HCT116 (cell line): ENCODE measurements at regions of chr1 and their contacts with region 1.

Region 1: DNA sequence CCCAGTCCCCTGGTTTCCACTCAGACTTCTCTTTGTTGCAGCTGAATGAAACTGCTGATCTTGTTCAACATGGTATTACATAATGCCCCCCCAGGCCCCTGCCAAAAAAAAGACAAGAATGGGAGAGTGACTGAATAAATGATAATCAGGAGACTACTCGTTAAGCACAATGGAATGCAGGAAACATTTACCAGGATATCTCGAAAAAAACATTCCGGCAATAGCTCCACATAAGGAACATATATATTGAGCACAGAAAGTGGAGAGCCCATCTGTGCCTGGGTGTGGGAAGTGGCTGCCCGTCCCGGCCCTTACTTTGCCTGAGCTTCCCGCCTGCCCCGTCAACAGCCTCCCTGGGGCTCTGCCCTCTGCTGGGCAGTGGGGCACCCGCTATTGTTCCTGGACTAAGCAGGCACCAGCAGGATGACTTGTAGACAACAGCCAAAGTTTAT is 13.4 kb downstream of the TRIM11 start:
- DNase-seq: no peak
- ATAC-seq: peak; percentile 79
- H3K4me3 ChIP-seq: no peak overlapping the region
- H3K27ac ChIP-seq: peak overlapping the region; percentile 64
- H3K4me1 ChIP-seq: peaks cover 25 to 33% of the 10 kb centered on the region in 2 experiments
- H3K27me3 ChIP-seq: no peaks in the 10 kb centered on the region
- CTCF ChIP-seq: peak; percentile 63 to 78 (median 73); a peak in 5 of 6 replicates
- POLR2A ChIP-seq: no peak
- RAD21 ChIP-seq: no peak; the same call in 1 of the 2 replicates

Region 2: GRCh38 chr1:228131766-228132165 is 261.5 kb before region 1 on chr1:
- CTCF ChIA-PET with region 1: interaction called, 9 read pairs
- POLR2A ChIA-PET with region 1: no interaction called
- RAD21 ChIA-PET with region 1: no interaction called
- intact Hi-C with region 1: loop called (anchors 1 kb)
- DNase-seq: no peak
- ATAC-seq: no peak
- H3K4me3 ChIP-seq: no peak overlapping the region
- H3K27ac ChIP-seq: 0 out of 2 replicates have a peak overlapping the region, but pooled peaks have one; percentile 6
- H3K4me1 ChIP-seq: peaks cover 7 to 18% of the 10 kb centered on the region in 2 experiments
- H3K27me3 ChIP-seq: peaks cover 3% of the 10 kb centered on the region; the same call in 1 of the 2 replicates
- CTCF ChIP-seq: no peak
- POLR2A ChIP-seq: no peak
- RAD21 ChIP-seq: no peak

Region 3: GRCh38 chr1:228378090-228378872 is 15.0 kb before region 1 on chr1:
- CTCF ChIA-PET with region 1: interaction called, 3 read pairs
- POLR2A ChIA-PET with region 1: no interaction called
- RAD21 ChIA-PET with region 1: no interaction called
- intact Hi-C with region 1: loop called (anchors 1 kb)
- DNase-seq: peak; percentile 56
- ATAC-seq: peak; percentile 88
- H3K4me3 ChIP-seq: peak overlapping the region; percentile 58 to 66
- H3K27ac ChIP-seq: peak overlapping the region; percentile 66
- H3K4me1 ChIP-seq: peaks cover 5 to 18% of the 10 kb centered on the region in 2 experiments
- H3K27me3 ChIP-seq: no peaks in the 10 kb centered on the region
- CTCF ChIP-seq: peak in 2 of 3 experiments; percentile 58 to 65; a peak in 5 of 6 replicates
- POLR2A ChIP-seq: no peak
- RAD21 ChIP-seq: peak; percentile 87

Region 4: DNA sequence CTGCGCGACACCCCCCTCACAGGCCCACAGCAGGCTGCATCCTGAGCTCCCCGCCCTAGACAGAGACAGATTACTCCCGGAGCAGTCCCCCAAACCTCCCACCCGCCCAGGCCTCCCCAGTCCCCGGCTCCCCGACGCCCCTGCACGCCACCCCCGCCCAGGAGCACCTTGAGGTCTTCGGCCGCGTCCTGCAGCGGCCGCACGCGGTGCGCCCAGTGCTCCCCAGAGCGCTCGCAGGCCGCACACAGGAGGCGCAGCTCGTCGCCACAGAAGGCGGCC is 12.7 kb after region 1 on chr1:
- CTCF ChIA-PET with region 1: interaction called, 10 read pairs
- POLR2A ChIA-PET with region 1: interaction called, 5 read pairs
- RAD21 ChIA-PET with region 1: no interaction called
- intact Hi-C with region 1: no loop called
- DNase-seq: no peak
- ATAC-seq: no peak
- H3K4me3 ChIP-seq: peak overlapping the region; percentile 82 to 98
- H3K27ac ChIP-seq: peak overlapping the region; percentile 90
- H3K4me1 ChIP-seq: peaks cover 9 to 21% of the 10 kb centered on the region in 2 experiments
- H3K27me3 ChIP-seq: no peaks in the 10 kb centered on the region
- CTCF ChIP-seq: no peak
- POLR2A ChIP-seq: no peak
- RAD21 ChIP-seq: no peak

Region 5: DNA sequence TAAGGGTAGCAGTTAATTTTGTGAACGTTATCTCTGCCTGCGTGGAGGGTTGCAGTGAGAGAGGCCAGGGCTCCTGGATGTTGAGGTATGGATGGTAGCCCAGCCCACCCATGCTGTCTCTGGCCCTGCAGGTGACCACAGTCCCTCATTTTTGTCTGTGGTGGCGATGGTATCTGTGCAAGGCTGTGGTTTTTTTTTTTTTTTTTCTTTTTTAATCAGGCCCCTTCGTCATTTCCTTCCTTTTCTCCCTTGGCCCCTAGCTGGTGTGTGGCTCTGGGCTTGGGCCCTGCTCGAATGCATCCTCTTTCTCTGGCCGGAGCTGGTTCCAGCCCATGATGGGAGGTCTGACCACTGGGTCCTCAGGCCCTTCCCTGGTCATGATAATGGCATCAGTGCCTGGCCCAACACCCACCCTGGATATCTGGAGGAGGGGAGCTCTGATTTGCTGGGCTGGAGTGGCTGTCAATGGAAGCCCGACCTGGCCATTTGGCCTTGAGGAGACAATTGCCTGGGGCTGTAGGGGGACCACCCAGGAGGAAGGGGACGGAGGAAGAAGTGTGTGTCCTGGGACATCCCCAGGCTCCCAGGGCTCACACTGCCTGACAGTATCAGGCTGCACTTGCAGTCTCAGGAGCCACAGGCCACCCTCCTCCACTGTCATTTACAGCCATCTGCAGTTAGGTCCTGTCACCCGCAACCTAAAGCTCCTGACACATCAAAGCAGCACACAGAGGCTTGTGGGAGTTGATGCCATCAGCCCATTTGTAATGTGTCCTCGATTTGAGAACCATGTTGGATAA is 85.8 kb after region 1 on chr1:
- CTCF ChIA-PET with region 1: no interaction called
- POLR2A ChIA-PET with region 1: no interaction called
- RAD21 ChIA-PET with region 1: no interaction called
- intact Hi-C with region 1: no loop called
- DNase-seq: no peak
- ATAC-seq: no peak
- H3K4me3 ChIP-seq: no peak overlapping the region
- H3K27ac ChIP-seq: no peak overlapping the region
- H3K4me1 ChIP-seq: no peaks in the 10 kb centered on the region
- H3K27me3 ChIP-seq: no peaks in the 10 kb centered on the region
- CTCF ChIP-seq: no peak
- POLR2A ChIP-seq: no peak
- RAD21 ChIP-seq: no peak